Dendritic cell treated with granulocyte-macrophage colony-stimulating factor and Interleukin-4, amounts not matched to agents 40 ng/mL and 50 ng/mL, for 4 days (primary cell): ENCODE measurements at regions of chr13 and their contacts with region 1.

Region 1: GRCh38 chr13:30617315-30618185 is at the start of gene USPL1:
- H3K4me3 Mint-ChIP-seq: no peak within 1 kb of the TSS
- H3K27ac Mint-ChIP-seq: no peak within 1 kb of the TSS
- H3K4me1 Mint-ChIP-seq: peaks cover 18% of the 10 kb centered on the region
- H3K27me3 Mint-ChIP-seq: no peaks in the 10 kb centered on the region

Region 2: GRCh38 chr13:29733147-29733611 is 884.4 kb before region 1 on chr13:
- intact Hi-C with region 1: no loop called
- H3K4me3 Mint-ChIP-seq: no peak overlapping the region
- H3K27ac Mint-ChIP-seq: no peak overlapping the region
- H3K4me1 Mint-ChIP-seq: peaks cover 8% of the 10 kb centered on the region
- H3K27me3 Mint-ChIP-seq: peaks cover 43% of the 10 kb centered on the region

Region 3: GRCh38 chr13:30306762-30307193 is 310.8 kb before region 1 on chr13:
- intact Hi-C with region 1: loop called (anchors 2 kb)
- H3K4me3 Mint-ChIP-seq: peak overlapping the region; percentile 92
- H3K27ac Mint-ChIP-seq: peak overlapping the region; percentile 92
- H3K4me1 Mint-ChIP-seq: peaks cover 46% of the 10 kb centered on the region
- H3K27me3 Mint-ChIP-seq: no peaks in the 10 kb centered on the region

Region 4: DNA sequence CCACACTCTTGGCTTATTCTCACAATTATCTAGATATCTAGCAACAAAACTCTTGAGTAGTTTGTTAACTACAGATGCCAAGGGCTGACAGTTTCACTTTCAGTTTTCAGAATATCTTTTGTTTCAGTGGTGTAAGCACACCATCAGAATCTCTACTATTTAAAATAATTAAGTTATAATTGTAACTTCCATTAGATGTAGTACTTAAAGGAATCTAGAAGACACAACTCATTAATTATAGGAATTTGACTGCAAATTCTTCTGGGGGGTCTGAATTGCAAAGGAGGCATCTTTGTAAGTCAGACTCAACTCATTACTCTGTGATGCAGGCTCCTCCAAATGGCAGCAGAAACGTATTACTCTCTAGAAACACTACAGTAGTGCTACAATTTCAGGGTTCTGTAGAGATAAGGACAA is 44.7 kb before region 1 on chr13:
- intact Hi-C with region 1: loop called (anchors 5 kb)
- H3K4me3 Mint-ChIP-seq: peak overlapping the region; percentile 9
- H3K27ac Mint-ChIP-seq: peak overlapping the region; percentile 63
- H3K4me1 Mint-ChIP-seq: peaks cover 35% of the 10 kb centered on the region
- H3K27me3 Mint-ChIP-seq: peaks cover 11% of the 10 kb centered on the region

Region 5: DNA sequence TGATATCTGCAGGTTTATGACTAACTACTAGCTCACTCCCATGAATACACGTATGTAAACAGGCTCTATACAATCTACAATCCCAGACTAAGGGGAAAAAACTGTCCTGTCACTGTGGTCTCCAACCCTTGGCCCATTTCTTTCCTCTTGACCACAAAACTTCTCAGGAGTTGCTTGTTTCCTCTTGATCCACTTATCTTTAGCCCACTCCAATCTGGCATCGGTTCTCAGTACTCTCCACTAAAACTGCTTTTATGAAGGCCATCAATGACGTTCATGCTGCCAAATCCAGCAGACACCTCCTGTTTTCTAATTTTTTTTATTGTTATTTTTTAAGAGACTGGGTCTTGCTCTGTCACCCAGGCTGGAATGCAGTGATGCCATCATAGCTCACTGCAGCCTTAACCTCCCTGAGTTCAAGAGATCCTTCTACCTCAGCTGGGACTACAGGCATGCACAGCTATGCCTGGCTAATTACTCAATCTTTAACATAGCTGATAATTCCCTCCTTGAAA is 31.7 kb before region 1 on chr13:
- intact Hi-C with region 1: no loop called
- H3K4me3 Mint-ChIP-seq: no peak overlapping the region
- H3K27ac Mint-ChIP-seq: no peak overlapping the region
- H3K4me1 Mint-ChIP-seq: peaks cover 14% of the 10 kb centered on the region
- H3K27me3 Mint-ChIP-seq: no peaks in the 10 kb centered on the region

Region 6: GRCh38 chr13:30659980-30660379 is 42.4 kb after region 1 on chr13:
- intact Hi-C with region 1: loop called (anchors 5 kb)
- H3K4me3 Mint-ChIP-seq: no peak overlapping the region
- H3K27ac Mint-ChIP-seq: peak overlapping the region; percentile 26
- H3K4me1 Mint-ChIP-seq: peaks cover 17% of the 10 kb centered on the region
- H3K27me3 Mint-ChIP-seq: no peaks in the 10 kb centered on the region

Region 7: DNA sequence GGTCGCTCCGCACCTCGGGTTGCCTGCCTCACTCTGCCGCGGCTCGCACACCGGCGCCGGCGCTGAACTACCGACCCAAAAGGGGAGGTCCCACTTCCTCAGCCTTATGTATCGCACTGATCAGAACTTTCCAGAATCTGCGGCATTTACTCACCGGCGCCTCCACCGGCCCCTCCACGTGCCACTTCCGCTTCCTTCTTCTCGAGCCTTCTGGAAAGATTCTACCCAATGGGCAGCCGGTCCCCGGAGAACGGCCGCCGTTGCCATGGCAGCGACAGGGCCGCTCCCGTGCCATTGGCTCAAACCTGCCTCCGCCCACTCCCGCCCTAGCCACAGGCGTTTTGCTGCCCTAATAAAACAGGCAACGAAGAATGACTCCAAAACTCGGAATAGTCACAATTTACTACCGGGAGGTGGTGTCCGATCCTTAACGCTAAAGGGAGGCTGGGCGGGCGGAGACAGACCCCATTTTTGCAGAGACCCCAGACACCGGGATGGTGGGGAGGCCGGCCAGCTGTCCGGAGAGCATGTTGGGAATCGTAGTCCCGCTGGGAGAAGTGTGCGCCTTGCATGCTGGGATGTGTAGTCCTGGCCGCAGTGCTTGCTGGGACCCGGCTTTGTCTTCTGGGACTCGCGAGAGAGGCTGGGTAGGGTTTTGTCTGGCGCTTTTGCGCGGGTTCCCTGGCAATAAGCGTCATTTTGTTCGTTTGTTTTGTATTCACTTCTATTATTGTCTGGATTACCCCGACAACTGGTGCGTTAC is 544.5 kb after region 1 on chr13 and contains the start of gene HSPH1:
- intact Hi-C with region 1: loop called (anchors 2 kb)
- H3K4me3 Mint-ChIP-seq: peak within 1 kb of the TSS; percentile 99
- H3K27ac Mint-ChIP-seq: peak within 1 kb of the TSS; percentile 96
- H3K4me1 Mint-ChIP-seq: peaks cover 30% of the 10 kb centered on the region
- H3K27me3 Mint-ChIP-seq: no peaks in the 10 kb centered on the region